Activated T-helper 1 cell treated with anti-CD3 and anti-CD28 coated beads, Interleukin-12 subunit alpha, Interleukin-12 subunit beta, Interleukin-2, Interleukin-4 antibody, amounts not matched to agents 30 ng/mL and 10 ng/mL and 1 ng/mL, durations not matched to agents 14 hours and 24 hours and 36 hours (primary cell): ENCODE measurements at regions of chr9 and their contacts with region 1.

Region 1: DNA sequence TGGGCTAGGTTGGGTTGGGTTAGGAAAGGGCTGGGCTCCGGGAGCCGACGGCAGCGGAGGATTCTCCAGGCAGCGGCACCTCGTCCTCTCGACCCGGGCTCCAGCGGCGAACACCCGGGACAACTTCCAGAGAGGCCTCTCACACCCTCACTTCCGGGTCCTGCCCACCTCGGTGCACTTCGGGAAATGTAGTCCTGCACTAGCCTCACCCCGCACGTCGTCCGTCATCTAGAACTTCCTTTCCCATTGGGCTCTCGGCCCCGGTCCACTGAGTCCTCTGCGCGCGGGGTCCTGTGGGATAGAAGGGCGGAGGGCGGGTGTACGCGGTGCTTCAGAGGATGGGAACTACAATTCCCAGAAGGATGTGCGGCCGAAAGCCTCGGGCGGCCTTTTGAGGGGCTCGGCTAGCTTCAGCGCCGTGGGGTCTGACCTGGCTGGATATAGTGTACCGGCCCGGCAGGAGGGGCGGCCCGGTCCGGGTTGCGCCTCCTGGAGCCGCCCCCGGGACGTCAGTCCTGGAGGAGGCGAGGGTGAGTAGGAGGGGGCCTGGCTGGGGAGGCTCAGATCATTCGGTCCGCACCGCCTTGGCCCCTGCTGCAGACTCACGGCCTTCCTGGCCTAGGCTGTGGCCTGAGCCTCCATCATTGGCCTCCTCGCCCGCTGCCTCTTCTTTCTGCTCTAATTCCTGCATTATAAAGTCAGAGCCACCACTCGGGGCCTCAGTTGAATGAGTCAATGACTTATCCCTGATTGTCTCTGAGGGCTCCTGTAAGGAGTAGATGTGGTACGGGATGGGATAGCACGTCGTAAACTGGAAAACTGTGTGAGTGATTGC is at the starts of genes ERP44 and INVS:
- DNase-seq: peak; percentile 96
- H3K4me3 Mint-ChIP-seq: peak within 1 kb of the TSS; percentile 99
- H3K27ac Mint-ChIP-seq: peak within 1 kb of the TSS; percentile 95
- H3K4me1 Mint-ChIP-seq: peaks cover 34% of the 10 kb centered on the region
- H3K27me3 Mint-ChIP-seq: no peaks in the 10 kb centered on the region
- total RNA-seq, gene ERP44: 17.3 and 18.1 TPM in 2 replicates
- total RNA-seq, gene INVS: 16.3 and 17.0 TPM in 2 replicates

Region 2: GRCh38 chr9:98255578-98256296 is 1843.4 kb before region 1 on chr9 and contains the start of gene TBC1D2:
- intact Hi-C with region 1: loop called (anchors 2 kb)
- DNase-seq: peak; percentile 96
- H3K4me3 Mint-ChIP-seq: peak within 1 kb of the TSS; percentile 89
- H3K27ac Mint-ChIP-seq: peak within 1 kb of the TSS; percentile 94
- H3K4me1 Mint-ChIP-seq: peaks cover 27% of the 10 kb centered on the region
- H3K27me3 Mint-ChIP-seq: peaks cover 3% of the 10 kb centered on the region
- total RNA-seq, gene TBC1D2: 1.8 and 2.2 TPM in 2 replicates

Region 3: DNA sequence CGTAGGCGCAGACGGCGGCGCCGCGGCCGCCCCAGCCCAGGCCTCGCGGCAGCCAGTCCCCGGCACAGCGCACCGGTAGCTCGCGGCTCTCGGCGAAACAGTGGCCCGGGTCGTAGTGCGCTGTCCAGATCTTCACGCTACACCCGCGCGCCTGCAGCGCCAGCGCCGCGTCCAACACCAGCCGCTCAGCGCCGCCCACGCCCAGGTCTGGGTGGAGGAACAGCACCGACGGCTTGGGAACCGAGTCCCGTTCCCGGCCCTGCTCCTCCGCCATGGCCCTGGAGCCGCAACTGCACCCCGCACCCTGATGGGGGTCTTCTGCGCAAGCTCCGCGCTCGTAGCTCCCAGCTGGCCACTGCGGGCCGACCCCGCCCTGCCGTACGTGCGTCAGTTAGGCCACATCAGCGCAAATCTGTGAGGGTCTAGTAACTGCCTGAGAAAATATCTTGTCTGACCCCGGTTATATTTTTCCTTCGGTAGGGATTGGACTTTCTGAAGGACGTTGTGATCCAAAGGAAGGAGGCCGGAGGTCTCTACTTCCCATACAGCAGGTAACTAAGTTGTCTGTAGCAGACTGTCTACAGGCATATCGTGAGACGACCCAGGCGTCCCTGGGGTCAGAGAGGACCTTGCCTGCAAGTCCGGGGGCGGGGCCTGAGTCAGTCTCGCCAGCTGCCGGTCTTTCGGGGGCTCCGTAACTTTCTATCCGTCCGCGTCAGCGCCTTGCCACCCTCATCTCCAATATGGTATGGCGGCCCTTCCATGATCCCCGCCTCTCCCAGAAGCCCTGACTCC is 877.3 kb before region 1 on chr9 and contains the starts of genes ALG2 and SEC61B:
- intact Hi-C with region 1: loop called (anchors 1 kb)
- DNase-seq: peak; percentile 89
- H3K4me3 Mint-ChIP-seq: peak within 1 kb of the TSS; percentile 99
- H3K27ac Mint-ChIP-seq: peak within 1 kb of the TSS; percentile 98
- H3K4me1 Mint-ChIP-seq: peaks cover 67% of the 10 kb centered on the region
- H3K27me3 Mint-ChIP-seq: no peaks in the 10 kb centered on the region
- total RNA-seq, gene ALG2: 37.6 and 39.7 TPM in 2 replicates
- total RNA-seq, gene SEC61B: 180 and 184 TPM in 2 replicates

Region 4: GRCh38 chr9:100028201-100028784 is 70.8 kb before region 1 on chr9:
- intact Hi-C with region 1: loop called (anchors 5 kb)
- DNase-seq: peak; percentile 43
- H3K4me3 Mint-ChIP-seq: no peak overlapping the region
- H3K27ac Mint-ChIP-seq: no peak overlapping the region
- H3K4me1 Mint-ChIP-seq: peaks cover 14% of the 10 kb centered on the region
- H3K27me3 Mint-ChIP-seq: no peaks in the 10 kb centered on the region

Region 5: DNA sequence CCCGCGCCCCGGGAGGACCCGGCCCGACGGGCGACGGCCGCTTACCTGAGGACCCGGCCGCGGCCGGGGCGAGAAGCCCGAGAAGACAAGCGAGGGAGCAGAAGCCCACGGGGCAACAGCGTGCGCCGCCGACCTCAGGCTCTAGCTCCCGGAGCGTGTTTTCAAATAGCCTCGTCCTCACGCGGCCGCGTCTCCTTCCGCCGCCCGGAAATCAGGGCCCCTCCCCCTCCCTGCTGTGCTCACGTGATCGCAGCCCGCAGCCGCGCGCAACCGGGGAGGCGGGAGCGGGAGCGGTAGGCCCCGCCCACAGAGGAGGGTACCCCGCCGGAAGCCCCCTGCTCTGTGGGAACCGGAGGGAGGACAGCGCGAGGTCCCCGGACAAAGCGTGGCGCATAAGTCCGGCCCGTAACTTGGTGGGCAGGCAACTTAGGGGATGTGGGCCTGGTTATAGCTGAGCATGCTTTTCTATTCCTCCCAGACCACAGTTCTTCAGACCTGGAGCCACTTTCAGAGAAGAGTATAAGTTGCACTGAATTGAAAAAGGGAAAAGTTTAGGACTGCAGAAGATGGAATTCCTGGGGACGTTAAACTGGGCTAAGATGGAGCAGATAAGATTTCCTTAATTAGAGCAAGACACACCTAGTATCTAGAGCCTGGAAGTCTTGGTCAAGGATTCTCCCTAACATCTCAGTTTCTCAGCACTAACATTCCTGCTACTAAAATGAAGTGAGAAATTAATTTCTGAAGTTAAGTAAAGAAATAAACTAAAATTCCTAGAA is 253.8 kb after region 1 on chr9 and contains the start of gene TEX10:
- intact Hi-C with region 1: loop called (anchors 1 kb)
- DNase-seq: peak; percentile 85
- H3K4me3 Mint-ChIP-seq: peak within 1 kb of the TSS; percentile 91
- H3K27ac Mint-ChIP-seq: peak within 1 kb of the TSS; percentile 75
- H3K4me1 Mint-ChIP-seq: peaks cover 50% of the 10 kb centered on the region
- H3K27me3 Mint-ChIP-seq: no peaks in the 10 kb centered on the region
- total RNA-seq, gene TEX10: 30.4 and 30.9 TPM in 2 replicates

Region 6: GRCh38 chr9:101398068-101398929 is 1299.2 kb after region 1 on chr9 and contains the starts of genes MRPL50 and ZNF189:
- intact Hi-C with region 1: loop called (anchors 1 kb)
- DNase-seq: peak; percentile 95
- H3K4me3 Mint-ChIP-seq: peak within 1 kb of the TSS; percentile 98
- H3K27ac Mint-ChIP-seq: peak within 1 kb of the TSS; percentile 99
- H3K4me1 Mint-ChIP-seq: peaks cover 45% of the 10 kb centered on the region
- H3K27me3 Mint-ChIP-seq: no peaks in the 10 kb centered on the region
- total RNA-seq, gene MRPL50: 16.3 and 16.6 TPM in 2 replicates
- total RNA-seq, gene ZNF189: 11.7 and 11.8 TPM in 2 replicates